ENCODE measurements at regions of chr14 and their contacts with region 1.

Region 1: DNA sequence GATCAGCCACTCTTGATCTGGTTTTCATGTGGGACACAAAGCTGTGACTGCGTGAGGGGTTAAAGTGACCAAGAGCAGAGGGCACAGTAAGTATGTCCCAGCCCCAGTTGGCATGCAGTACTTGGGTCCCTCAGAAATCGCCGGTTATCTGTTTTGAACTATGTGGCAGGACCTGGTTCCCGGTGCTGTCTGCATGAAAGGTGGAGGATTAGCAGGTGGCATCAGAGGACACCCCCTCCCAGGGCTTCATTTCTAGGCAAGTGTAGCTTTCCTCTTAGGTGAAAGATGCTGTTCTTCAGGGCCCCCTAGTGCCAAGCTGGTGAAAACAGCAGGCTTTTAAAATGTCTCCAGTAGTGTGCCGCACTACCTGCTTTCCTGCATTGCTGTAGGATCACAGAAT is 57.1 kb downstream of the ATG14 start:
- DNase-seq: peak in 2 of 3 donors; percentile 24 to 25
- H3K4me3 ChIP-seq: no peak overlapping the region
- H3K4me3 Mint-ChIP-seq: no peak overlapping the region
- H3K27ac ChIP-seq: peak overlapping the region in 1 of 2 donors; percentile 46
- H3K27ac Mint-ChIP-seq: peak overlapping the region in 4 of 7 donors; percentile 22 to 52 (median 46)
- H3K4me1 ChIP-seq: no peaks in the 10 kb centered on the region
- H3K4me1 Mint-ChIP-seq: no peaks in the 10 kb centered on the region
- H3K27me3 ChIP-seq: no peaks in the 10 kb centered on the region
- H3K27me3 Mint-ChIP-seq: peaks cover 0 to 2% (median 0%) of the 10 kb centered on the region in 3 donors
- CTCF ChIP-seq: peak; percentile 52

Region 2: GRCh38 chr14:54942913-54943312 is 411.6 kb before region 1 on chr14:
- intact Hi-C with region 1: no loop called
- DNase-seq: peak; percentile 14 to 49 (median 41)
- H3K4me3 ChIP-seq: peak overlapping the region; percentile 17 to 64 (median 61)
- H3K4me3 Mint-ChIP-seq: peak overlapping the region; percentile 58 to 85
- H3K27ac ChIP-seq: peak overlapping the region in 1 of 2 donors; percentile 62
- H3K27ac Mint-ChIP-seq: peak overlapping the region in 5 of 7 donors; percentile 15 to 68 (median 31)
- H3K4me1 ChIP-seq: peaks cover 4 to 14% of the 10 kb centered on the region in 2 donors
- H3K4me1 Mint-ChIP-seq: peaks cover 15% of the 10 kb centered on the region
- H3K27me3 ChIP-seq: no peaks in the 10 kb centered on the region
- H3K27me3 Mint-ChIP-seq: no peaks in the 10 kb centered on the region
- CTCF ChIP-seq: no peak

Region 3: GRCh38 chr14:55245657-55246268 is 108.7 kb before region 1 on chr14:
- intact Hi-C with region 1: loop called in 1 of 2 experiments (anchors 10 kb)
- DNase-seq: peak in 1 of 3 donors; percentile 11
- H3K4me3 ChIP-seq: no peak overlapping the region
- H3K4me3 Mint-ChIP-seq: no peak overlapping the region
- H3K27ac ChIP-seq: no peak overlapping the region
- H3K27ac Mint-ChIP-seq: no peak overlapping the region
- H3K4me1 ChIP-seq: no peaks in the 10 kb centered on the region
- H3K4me1 Mint-ChIP-seq: peaks cover 4% of the 10 kb centered on the region
- H3K27me3 ChIP-seq: peaks cover 3 to 6% of the 10 kb centered on the region in 2 donors
- H3K27me3 Mint-ChIP-seq: peaks cover 8 to 13% (median 9%) of the 10 kb centered on the region in 3 donors
- CTCF ChIP-seq: peak; percentile 63

Region 4: DNA sequence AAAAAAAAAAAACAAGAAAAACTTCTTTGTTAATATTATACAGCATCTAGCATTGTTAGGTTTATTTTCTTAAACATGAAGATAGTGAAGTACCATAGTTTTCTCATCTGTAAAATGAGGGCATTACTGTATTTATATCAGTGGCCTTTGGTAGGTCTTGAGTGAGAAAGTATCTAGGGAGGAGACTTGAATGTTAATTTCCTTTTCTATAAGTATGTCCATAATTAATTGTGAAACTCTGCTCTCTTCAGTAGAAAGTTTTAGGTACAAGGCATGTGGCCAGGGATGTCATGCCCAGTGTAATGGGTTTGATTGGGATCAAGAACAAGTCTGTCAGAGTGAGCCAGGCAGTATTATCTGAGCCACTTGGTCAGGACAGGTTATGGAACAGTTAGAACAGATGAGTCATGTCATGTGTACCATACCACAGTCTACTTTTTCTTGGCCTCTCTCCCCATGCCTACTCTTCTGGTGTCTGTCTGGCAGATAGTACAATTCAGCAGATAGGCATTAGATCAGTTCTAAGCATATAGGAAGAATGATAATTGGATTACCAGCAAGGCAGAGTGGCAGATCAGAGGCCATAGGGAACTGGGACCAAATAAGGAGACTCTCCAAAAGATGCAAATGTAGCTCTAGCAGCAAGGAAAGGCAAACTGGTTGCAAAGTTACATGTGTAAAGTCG is 52.9 kb before region 1 on chr14:
- intact Hi-C with region 1: no loop called
- DNase-seq: peak in 2 of 3 donors; percentile 21 to 40
- H3K4me3 ChIP-seq: no peak overlapping the region
- H3K4me3 Mint-ChIP-seq: no peak overlapping the region
- H3K27ac ChIP-seq: peak overlapping the region in 1 of 2 donors; percentile 92
- H3K27ac Mint-ChIP-seq: peak overlapping the region; percentile 70 to 98 (median 97)
- H3K4me1 ChIP-seq: peaks cover 35 to 43% of the 10 kb centered on the region in 2 donors
- H3K4me1 Mint-ChIP-seq: peaks cover 65% of the 10 kb centered on the region
- H3K27me3 ChIP-seq: no peaks in the 10 kb centered on the region
- H3K27me3 Mint-ChIP-seq: peaks cover 0 to 1% (median 0%) of the 10 kb centered on the region in 3 donors
- CTCF ChIP-seq: no peak